ENCODE measurements at regions of chr11 and their contacts with region 1.

Region 1: GRCh38 chr11:120511116-120511819 is at the start of gene GRIK4:
- DNase-seq: peak; percentile 77 to 91 (median 83)
- ATAC-seq: peak; percentile 53 to 94 (median 90)
- H3K4me3 ChIP-seq: peak within 1 kb of the TSS in 11 of 12 donors; percentile 18 to 62 (median 51)
- H3K27ac ChIP-seq: no peak within 1 kb of the TSS
- H3K4me1 ChIP-seq: peaks cover 0 to 7% (median 0%) of the 10 kb centered on the region in 12 donors
- H3K27me3 ChIP-seq: peaks cover 3 to 54% (median 12%) of the 10 kb centered on the region in 9 donors
- CTCF ChIP-seq: peak; percentile 88 to 95 (median 93)
- POLR2A ChIP-seq: no peak
- total RNA-seq, gene GRIK4: 0.07 to 0.45 (median 0.13) TPM in 4 of 9 donors, not detected in the others

Region 2: DNA sequence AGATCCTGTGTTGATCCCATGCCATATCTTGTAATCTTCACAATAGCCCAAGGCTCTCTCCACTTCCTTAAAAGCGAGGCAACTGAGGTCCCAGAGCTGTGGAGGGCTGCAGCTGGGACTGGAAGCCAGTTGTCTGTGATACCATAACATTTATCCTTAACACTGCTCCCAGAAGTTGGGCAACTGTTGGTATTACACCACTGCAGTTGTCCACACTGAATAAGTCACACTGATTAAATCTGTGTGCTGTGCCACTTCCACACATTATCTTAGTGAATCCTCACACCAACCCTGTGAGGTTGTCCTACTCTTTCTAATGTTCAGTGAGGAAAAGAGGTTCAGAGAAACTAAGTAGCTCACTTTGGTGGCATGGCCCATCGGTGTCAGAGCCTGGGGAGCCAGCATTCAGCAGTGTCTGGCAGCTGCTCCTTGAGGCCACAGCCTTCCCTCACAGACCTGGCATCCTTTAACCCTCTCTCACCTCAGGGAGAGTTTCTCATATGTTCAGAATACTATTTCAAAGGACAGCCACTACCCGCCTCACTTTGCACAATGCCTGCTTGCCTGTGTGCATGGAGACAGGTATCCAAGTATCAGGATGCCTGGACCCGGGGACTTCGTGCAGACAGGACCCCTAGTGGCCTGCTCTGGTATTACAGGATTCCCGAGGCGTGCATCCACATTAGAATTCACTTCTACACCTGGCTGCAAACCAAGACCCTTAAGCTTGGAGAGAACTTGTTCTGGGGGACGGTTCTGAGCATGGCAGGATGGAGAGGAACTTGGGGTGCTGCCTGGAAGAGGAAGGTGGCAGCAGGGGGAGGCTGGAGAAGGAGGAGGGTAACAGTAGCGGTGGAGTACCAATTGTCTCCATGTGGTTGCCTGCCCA is 290.8 kb after region 1 on chr11:
- intact Hi-C with region 1: loop called (anchors 1 to 10 kb)
- DNase-seq: peak; percentile 42 to 66 (median 44)
- ATAC-seq: peak in 2 of 4 donors; percentile 59
- H3K4me3 ChIP-seq: no peak overlapping the region
- H3K27ac ChIP-seq: no peak overlapping the region
- H3K4me1 ChIP-seq: no peaks in the 10 kb centered on the region
- H3K27me3 ChIP-seq: peaks cover 0 to 22% (median 0%) of the 10 kb centered on the region in 9 donors
- CTCF ChIP-seq: peak; percentile 71 to 93 (median 87)
- POLR2A ChIP-seq: no peak

Region 3: DNA sequence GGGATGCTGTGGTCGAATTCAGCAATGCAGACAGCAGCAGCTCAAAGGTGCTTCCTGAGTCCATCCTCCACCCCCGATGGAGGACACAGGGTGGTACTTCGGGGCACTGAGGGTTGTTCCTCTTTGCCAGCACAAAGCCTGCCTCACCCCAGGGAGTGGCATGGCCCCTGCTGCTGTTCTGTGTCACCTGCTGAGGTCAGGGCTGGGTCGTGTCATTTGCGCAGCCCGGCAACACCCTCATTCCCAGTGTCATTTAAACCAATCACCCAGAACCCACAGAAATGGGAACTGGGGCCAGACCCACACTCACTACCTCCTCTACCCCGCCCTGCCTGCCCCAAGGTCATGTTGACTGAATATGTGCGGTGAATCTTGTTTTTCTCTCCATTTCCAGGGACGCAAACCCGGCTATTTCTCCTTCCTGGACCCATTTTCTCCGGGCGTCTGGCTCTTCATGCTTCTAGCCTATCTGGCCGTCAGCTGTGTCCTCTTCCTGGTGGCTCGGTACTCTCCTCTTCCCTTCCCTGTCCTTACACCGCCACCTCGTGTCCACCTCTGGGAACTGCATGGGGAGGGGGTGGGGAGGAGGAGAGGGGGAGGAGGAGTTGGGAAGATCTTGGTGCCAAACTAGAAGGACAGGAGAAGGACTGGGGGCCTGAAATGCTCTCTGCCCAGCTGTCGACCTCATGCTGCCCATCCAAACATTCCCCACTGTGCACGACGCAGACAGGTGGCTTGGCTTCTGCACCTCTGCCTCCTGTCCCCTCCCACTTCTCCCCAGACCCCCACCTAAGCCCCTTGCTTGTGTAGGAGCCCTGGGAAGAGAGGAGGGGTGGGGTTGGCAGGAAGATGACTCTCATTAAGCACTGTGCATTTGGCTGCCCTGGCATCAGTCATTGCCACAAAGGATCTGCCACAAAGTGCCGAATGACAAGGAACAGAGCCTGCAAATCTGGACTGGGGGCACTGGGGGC is 441.5 kb after region 1 on chr11:
- intact Hi-C with region 1: loop called (anchors 1 to 5 kb)
- DNase-seq: peak; percentile 70 to 89 (median 72)
- ATAC-seq: peak; percentile 75 to 96 (median 92)
- H3K4me3 ChIP-seq: peak overlapping the region in 6 of 12 donors; percentile 9 to 38 (median 26)
- H3K27ac ChIP-seq: peak overlapping the region in 3 of 12 donors; percentile 28 to 39 (median 38)
- H3K4me1 ChIP-seq: peaks cover 0 to 12% (median 3%) of the 10 kb centered on the region in 12 donors
- H3K27me3 ChIP-seq: peaks cover 0 to 20% (median 3%) of the 10 kb centered on the region in 9 donors
- CTCF ChIP-seq: peak; percentile 47 to 81 (median 68)
- POLR2A ChIP-seq: no peak

Region 4: GRCh38 chr11:121591405-121592033 is 1080.3 kb after region 1 on chr11:
- intact Hi-C with region 1: loop called in 1 of 10 experiments (anchors 10 kb)
- DNase-seq: peak in 4 of 5 donors; percentile 43 to 67 (median 57)
- ATAC-seq: peak; percentile 45 to 82 (median 78)
- H3K4me3 ChIP-seq: no peak overlapping the region
- H3K27ac ChIP-seq: no peak overlapping the region
- H3K4me1 ChIP-seq: peaks cover 0 to 19% (median 0%) of the 10 kb centered on the region in 12 donors
- H3K27me3 ChIP-seq: no peaks in the 10 kb centered on the region
- CTCF ChIP-seq: peak; percentile 78 to 92 (median 87)
- POLR2A ChIP-seq: no peak